Sigmoid colon (tissue), 7 donors: ENCODE measurements at regions of chr1 and their contacts with region 1.

Region 1: GRCh38 chr1:201170533-201171062 is 16.3 kb upstream of the TMEM9 start:
- DNase-seq: peak; percentile 97
- H3K4me3 ChIP-seq: peak overlapping the region; percentile 62 to 66 (median 64)
- H3K27ac ChIP-seq: peak overlapping the region; percentile 84 to 95 (median 86)
- H3K4me1 ChIP-seq: peaks cover 0 to 10% (median 8%) of the 10 kb centered on the region in 4 donors
- H3K27me3 ChIP-seq: no peaks in the 10 kb centered on the region
- CTCF ChIP-seq: no peak
- EP300 ChIP-seq: peak in 1 of 4 donors; percentile 35
- POLR2A ChIP-seq: peak; percentile 58 to 79

Region 2: DNA sequence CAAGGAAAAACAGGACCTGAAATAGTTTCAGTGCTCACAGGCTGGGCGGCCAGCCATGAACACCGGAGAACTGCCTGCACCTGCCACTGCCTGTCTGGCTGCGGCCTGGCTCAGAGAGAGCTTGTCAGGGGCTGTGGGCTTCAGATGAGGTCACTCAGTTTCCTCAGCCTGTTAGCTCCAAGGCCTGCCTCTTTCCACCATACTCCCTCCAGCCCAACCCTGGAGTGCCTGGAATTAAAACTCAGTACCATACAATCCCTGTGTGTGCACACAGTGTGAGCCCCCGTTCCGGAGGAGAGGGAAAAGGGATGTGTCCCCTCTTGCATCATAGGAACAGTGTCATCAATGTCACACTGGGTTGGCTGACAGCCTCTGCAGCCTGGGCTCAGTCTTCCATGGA is 74.6 kb before region 1 on chr1:
- intact Hi-C with region 1: no loop called
- DNase-seq: no peak
- H3K4me3 ChIP-seq: no peak overlapping the region
- H3K27ac ChIP-seq: no peak overlapping the region
- H3K4me1 ChIP-seq: no peaks in the 10 kb centered on the region
- H3K27me3 ChIP-seq: no peaks in the 10 kb centered on the region
- CTCF ChIP-seq: no peak
- EP300 ChIP-seq: no peak
- POLR2A ChIP-seq: no peak

Region 3: GRCh38 chr1:201154389-201155165 is 16.0 kb before region 1 on chr1 and contains the start of gene TMEM9:
- intact Hi-C with region 1: loop called (anchors 1 kb)
- DNase-seq: peak; percentile 99
- H3K4me3 ChIP-seq: peak within 1 kb of the TSS; percentile 65 to 91 (median 90)
- H3K27ac ChIP-seq: peak within 1 kb of the TSS; percentile 78 to 86 (median 80)
- H3K4me1 ChIP-seq: peaks cover 0 to 20% (median 13%) of the 10 kb centered on the region in 4 donors
- H3K27me3 ChIP-seq: no peaks in the 10 kb centered on the region
- CTCF ChIP-seq: no peak
- EP300 ChIP-seq: no peak
- POLR2A ChIP-seq: no peak
- total RNA-seq, gene TMEM9: 56.2 to 78.3 (median 65.5) TPM